ENCODE measurements at regions of chr19 and their contacts with region 1.

Region 1: GRCh38 chr19:43101950-43102349 is 19.4 kb upstream of the PSG2 start:
- DNase-seq: no peak
- H3K4me3 ChIP-seq: no peak overlapping the region
- CTCF ChIP-seq: no peak

Region 2: DNA sequence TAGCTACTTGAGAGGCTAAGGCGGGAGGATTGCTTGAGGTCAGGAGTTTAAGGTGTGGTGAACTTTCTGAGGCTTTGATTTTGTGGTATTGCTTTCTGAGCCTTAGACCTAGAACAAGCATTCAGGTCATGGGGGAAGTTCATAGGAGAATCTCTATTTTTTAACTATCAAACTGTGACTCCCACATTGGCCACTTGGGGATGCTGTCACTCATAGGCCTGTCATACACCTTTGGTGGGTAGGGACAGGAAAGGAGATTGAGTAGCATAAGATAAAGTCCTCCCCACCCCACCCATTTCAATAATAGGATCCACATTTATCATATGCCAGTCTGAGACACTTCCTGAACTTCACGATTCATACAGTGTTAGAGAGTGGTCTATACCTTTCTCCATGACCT is 22.4 kb after region 1 on chr19:
- CTCF ChIA-PET with region 1: no interaction called
- POLR2A ChIA-PET with region 1: no interaction called
- DNase-seq: no peak
- H3K4me3 ChIP-seq: no peak overlapping the region
- CTCF ChIP-seq: no peak

Region 3: GRCh38 chr19:43148233-43148632 is 46.3 kb after region 1 on chr19:
- CTCF ChIA-PET with region 1: no interaction called
- POLR2A ChIA-PET with region 1: no interaction called
- DNase-seq: peak; percentile 83
- H3K4me3 ChIP-seq: no peak overlapping the region
- CTCF ChIP-seq: no peak

Region 4: DNA sequence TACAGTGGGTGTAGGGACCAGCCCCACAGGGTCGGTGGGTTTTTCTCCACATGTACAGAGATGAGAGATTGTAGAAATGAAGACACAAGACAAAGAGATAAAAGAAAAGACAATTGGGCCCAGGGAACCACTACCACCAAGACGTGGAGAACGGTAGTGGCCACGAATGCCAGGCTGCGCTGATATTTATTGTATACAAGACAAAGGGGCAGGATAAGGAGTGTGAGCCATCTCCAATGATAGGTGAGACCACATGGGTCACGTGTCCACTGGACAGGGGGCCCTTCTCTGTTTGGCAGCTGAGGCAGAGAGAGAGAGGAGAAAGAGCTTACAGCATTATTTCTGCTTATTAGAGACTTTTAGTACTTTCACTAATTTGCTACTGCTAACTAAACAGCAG is 89.2 kb after region 1 on chr19:
- CTCF ChIA-PET with region 1: interaction called, 10 read pairs
- POLR2A ChIA-PET with region 1: no interaction called
- DNase-seq: no peak
- H3K4me3 ChIP-seq: no peak overlapping the region
- CTCF ChIP-seq: no peak

Region 5: DNA sequence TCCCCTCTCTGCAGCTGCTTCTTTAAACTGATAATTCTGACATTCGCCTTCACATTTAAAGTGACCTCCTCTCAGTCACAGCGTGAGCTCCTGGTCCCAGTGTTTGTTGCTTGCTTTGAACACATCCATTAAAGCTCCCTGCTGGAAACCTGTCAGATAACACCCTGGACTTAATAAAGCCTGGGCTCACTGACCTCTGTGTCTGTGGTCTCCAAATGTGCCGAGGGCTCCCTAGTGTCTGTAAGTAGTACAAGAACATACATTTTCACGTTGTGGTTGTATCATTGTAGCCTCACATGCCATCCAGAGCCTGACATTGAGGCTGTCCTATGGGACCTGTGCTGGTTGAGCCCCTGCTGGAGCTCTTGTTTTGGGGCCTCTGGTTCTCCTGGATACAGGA is 106.0 kb after region 1 on chr19:
- CTCF ChIA-PET with region 1: interaction called, 53 read pairs
- POLR2A ChIA-PET with region 1: no interaction called
- DNase-seq: no peak
- H3K4me3 ChIP-seq: no peak overlapping the region
- CTCF ChIP-seq: no peak

Measured in AG04449 (cell line).